GM23248 (cell line): ENCODE measurements at regions of chr12 and their contacts with region 1.

Region 1: DNA sequence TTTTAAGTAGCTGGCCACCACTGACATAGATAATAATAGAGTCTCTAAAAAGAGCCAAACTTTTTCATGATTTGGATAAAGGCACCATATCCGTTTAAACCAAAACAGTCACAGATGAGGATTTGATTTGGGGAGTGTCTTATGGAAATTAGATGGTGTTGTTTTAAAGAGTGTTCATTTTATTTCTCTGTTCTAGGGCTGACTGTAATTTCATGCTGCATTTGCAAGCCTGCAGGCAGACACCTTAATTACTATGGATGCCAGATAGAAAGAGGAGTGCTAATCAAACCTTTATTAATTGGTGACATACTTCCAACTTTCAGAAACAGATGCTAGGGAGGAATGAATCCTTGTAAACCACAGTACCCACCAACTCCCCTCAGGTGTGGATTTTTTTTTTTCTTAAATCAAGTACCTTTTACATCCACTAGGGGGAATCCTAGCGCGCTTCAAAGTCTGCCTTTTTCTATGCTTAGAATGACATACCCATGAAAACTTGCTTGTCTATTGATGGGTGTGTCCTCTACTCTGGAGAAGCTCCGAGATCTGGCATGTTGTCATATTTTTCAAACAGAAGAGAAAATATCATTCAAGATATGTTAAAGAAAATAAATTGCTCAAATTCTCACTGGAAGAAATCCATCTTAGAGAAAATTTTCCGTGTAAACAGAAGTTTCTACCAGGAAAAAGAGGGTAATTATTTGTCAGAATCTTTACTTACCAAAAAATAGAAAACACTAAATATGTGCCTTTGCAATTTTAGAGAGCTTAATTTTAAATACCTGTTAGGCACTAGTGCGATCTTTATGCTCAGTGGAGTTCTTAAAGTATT is 14.2 kb upstream of the PLXNC1 start:
- DNase-seq: peak; percentile 82
- H3K4me3 ChIP-seq: peak overlapping the region; percentile 61
- H3K27ac ChIP-seq: no peak overlapping the region
- H3K4me1 ChIP-seq: no peaks in the 10 kb centered on the region
- H3K27me3 ChIP-seq: peaks cover 5% of the 10 kb centered on the region; the same call in 1 of the 2 replicates

Region 2: GRCh38 chr12:94039914-94040313 is 94.3 kb before region 1 on chr12:
- in situ Hi-C with region 1: no loop called
- DNase-seq: peak; percentile 53
- H3K4me3 ChIP-seq: no peak overlapping the region
- H3K27ac ChIP-seq: no peak overlapping the region
- H3K4me1 ChIP-seq: no peaks in the 10 kb centered on the region
- H3K27me3 ChIP-seq: no peaks in the 10 kb centered on the region

Region 3: GRCh38 chr12:94353130-94353529 is 218.9 kb after region 1 on chr12:
- in situ Hi-C with region 1: no loop called
- DNase-seq: no peak
- H3K4me3 ChIP-seq: no peak overlapping the region
- H3K27ac ChIP-seq: no peak overlapping the region
- H3K4me1 ChIP-seq: no peaks in the 10 kb centered on the region
- H3K27me3 ChIP-seq: no peaks in the 10 kb centered on the region

Region 4: DNA sequence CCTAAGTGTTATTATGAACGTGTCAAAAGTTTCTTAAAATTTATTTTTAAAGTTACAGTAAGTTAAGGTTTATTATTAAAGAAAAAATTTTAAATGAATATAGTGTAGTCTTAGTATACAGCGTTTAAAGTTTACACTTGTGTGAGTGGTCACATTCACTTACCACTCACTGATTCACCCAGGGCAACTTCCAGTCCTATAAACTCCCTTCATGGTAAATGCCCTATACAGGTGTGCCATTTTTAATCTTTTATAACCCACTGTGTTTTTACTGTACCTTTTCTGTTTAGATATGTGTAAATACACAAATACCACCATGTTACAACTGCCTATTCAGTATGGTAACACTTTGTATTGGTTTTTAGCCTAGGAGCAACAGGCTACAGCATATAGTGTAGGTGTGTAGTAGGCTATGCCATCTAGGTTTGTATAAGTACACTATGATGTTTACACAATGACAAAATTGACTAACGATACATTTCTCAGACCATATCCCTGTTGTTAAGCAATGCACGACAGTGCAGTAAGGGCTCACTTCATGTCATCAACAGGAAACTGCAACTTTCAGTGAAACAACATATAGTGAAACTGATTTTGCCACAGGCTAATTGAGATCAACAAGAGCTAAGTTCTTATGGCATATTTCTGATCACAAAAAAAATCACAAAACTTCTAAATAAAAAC is 628.2 kb after region 1 on chr12:
- in situ Hi-C with region 1: loop called (anchors 25 kb)
- DNase-seq: no peak
- H3K4me3 ChIP-seq: no peak overlapping the region
- H3K27ac ChIP-seq: no peak overlapping the region
- H3K4me1 ChIP-seq: peaks cover 19% of the 10 kb centered on the region
- H3K27me3 ChIP-seq: no peaks in the 10 kb centered on the region